Activated B cell treated with CpG ODN at 0.5 μM for 24 hours (primary cell): ENCODE measurements at regions of chr3 and their contacts with region 1.

Region 1: GRCh38 chr3:156483961-156484787 is 70.7 kb downstream of the SSR3 start:
- DNase-seq: peak; percentile 20
- ATAC-seq: peak; percentile 81
- H3K4me3 Mint-ChIP-seq: peak overlapping the region; percentile 79
- H3K27ac Mint-ChIP-seq: peak overlapping the region; percentile 93
- H3K4me1 Mint-ChIP-seq: peaks cover 32% of the 10 kb centered on the region
- H3K27me3 Mint-ChIP-seq: peaks cover under 1% of the 10 kb centered on the region
- CTCF ChIP-seq: no peak

Region 2: GRCh38 chr3:155870133-155870944 is 613.8 kb before region 1 on chr3 and contains the start of gene GMPS:
- CTCF ChIA-PET with region 1: no interaction called
- POLR2A ChIA-PET with region 1: no interaction called
- intact Hi-C with region 1: loop called (anchors 1 kb)
- DNase-seq: peak; percentile 97
- ATAC-seq: peak; percentile 92
- H3K4me3 Mint-ChIP-seq: peak within 1 kb of the TSS; percentile 92
- H3K27ac Mint-ChIP-seq: peak within 1 kb of the TSS; percentile 93
- H3K4me1 Mint-ChIP-seq: peaks cover 18% of the 10 kb centered on the region
- H3K27me3 Mint-ChIP-seq: no peaks in the 10 kb centered on the region
- CTCF ChIP-seq: no peak
- total RNA-seq, gene GMPS: 42.2 and 45.1 TPM in 2 replicates

Region 3: DNA sequence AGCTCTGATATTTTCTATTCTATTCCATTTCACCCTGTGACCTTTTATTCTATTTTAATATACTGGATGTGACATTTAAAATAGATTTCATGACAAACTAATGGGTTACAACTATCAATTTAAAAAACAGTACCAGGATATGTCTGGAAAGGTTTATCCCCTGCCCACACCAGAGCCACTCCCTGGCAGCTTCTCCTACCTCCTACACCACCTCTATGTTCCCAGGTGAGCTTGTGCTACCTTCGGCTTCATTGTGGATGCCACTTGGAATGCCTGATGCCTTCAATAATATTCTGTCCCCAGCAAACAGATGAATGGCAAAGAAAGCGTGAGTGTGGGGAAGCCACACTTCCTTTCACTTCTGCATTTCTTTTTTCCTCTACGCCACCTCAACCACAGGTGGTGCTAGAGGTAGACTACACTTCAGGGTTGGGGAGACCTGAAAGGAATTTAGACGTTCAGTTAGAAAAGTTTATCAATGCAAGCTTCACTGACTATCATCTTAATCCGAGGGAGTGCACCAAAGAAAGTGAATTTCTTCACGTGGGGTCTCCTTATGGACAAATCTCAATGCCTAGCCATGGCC is 142.2 kb before region 1 on chr3:
- CTCF ChIA-PET with region 1: no interaction called
- POLR2A ChIA-PET with region 1: no interaction called
- intact Hi-C with region 1: loop called (anchors 5 kb)
- DNase-seq: no peak
- ATAC-seq: peak; percentile 94
- H3K4me3 Mint-ChIP-seq: no peak overlapping the region
- H3K27ac Mint-ChIP-seq: no peak overlapping the region
- H3K4me1 Mint-ChIP-seq: peaks cover 6% of the 10 kb centered on the region
- H3K27me3 Mint-ChIP-seq: peaks cover 32% of the 10 kb centered on the region
- CTCF ChIP-seq: no peak

Region 4: GRCh38 chr3:156519758-156520162 is 35.6 kb after region 1 on chr3:
- CTCF ChIA-PET with region 1: no interaction called
- POLR2A ChIA-PET with region 1: no interaction called
- intact Hi-C with region 1: loop called (anchors 5 kb)
- DNase-seq: no peak
- ATAC-seq: no peak
- H3K4me3 Mint-ChIP-seq: no peak overlapping the region
- H3K27ac Mint-ChIP-seq: no peak overlapping the region
- H3K4me1 Mint-ChIP-seq: peaks cover 6% of the 10 kb centered on the region
- H3K27me3 Mint-ChIP-seq: peaks cover 8% of the 10 kb centered on the region
- CTCF ChIP-seq: no peak

Region 5: GRCh38 chr3:156816800-156817645 is 332.8 kb after region 1 on chr3:
- CTCF ChIA-PET with region 1: no interaction called
- POLR2A ChIA-PET with region 1: interaction called, 3 read pairs
- intact Hi-C with region 1: loop called (anchors 2 kb)
- DNase-seq: peak; percentile 93
- ATAC-seq: peak; percentile 83
- H3K4me3 Mint-ChIP-seq: peak overlapping the region; percentile 94
- H3K27ac Mint-ChIP-seq: peak overlapping the region; percentile 99
- H3K4me1 Mint-ChIP-seq: peaks cover 42% of the 10 kb centered on the region
- H3K27me3 Mint-ChIP-seq: no peaks in the 10 kb centered on the region
- CTCF ChIP-seq: no peak

Region 6: GRCh38 chr3:156978481-156978961 is 494.3 kb after region 1 on chr3:
- CTCF ChIA-PET with region 1: no interaction called
- POLR2A ChIA-PET with region 1: interaction called, 3 read pairs
- intact Hi-C with region 1: loop called (anchors 2 kb)
- DNase-seq: no peak
- ATAC-seq: peak; percentile 90
- H3K4me3 Mint-ChIP-seq: peak overlapping the region; percentile 61
- H3K27ac Mint-ChIP-seq: peak overlapping the region; percentile 95
- H3K4me1 Mint-ChIP-seq: peaks cover 51% of the 10 kb centered on the region
- H3K27me3 Mint-ChIP-seq: no peaks in the 10 kb centered on the region
- CTCF ChIP-seq: no peak